WTC11 (cell line): ENCODE measurements at regions of chr7 and their contacts with region 1.

Region 1: GRCh38 chr7:129210256-129210988 is 14.4 kb upstream of the AHCYL2 start:
- DNase-seq: peak; percentile 91
- ATAC-seq: peak; percentile 90
- H3K4me3 Mint-ChIP-seq: no peak overlapping the region
- H3K27ac Mint-ChIP-seq: no peak overlapping the region; the same call in 1 of the 2 replicates
- H3K4me1 Mint-ChIP-seq: 0 out of 2 replicates have a peak, but pooled peaks cover 5% of the 10 kb centered on the region
- H3K27me3 Mint-ChIP-seq: no peaks in the 10 kb centered on the region
- CTCF ChIP-seq: peak; percentile 84

Region 2: GRCh38 chr7:129144095-129144833 is 66.2 kb before region 1 on chr7 and contains the start of gene TSPAN33:
- CTCF ChIA-PET with region 1: interaction called, 10 read pairs
- POLR2A ChIA-PET with region 1: no interaction called
- DNase-seq: peak; percentile 88
- ATAC-seq: peak; percentile 98
- H3K4me3 Mint-ChIP-seq: peak within 1 kb of the TSS; percentile 78
- H3K27ac Mint-ChIP-seq: no peak within 1 kb of the TSS; the same call in 1 of the 2 replicates
- H3K4me1 Mint-ChIP-seq: peaks cover 14% of the 10 kb centered on the region
- H3K27me3 Mint-ChIP-seq: peaks cover 38% of the 10 kb centered on the region
- CTCF ChIP-seq: no peak
- total RNA-seq, gene TSPAN33: 30.0 to 42.9 TPM (median 39.8 TPM) in 3 replicates

Region 3: GRCh38 chr7:129169171-129169671 is 41.2 kb before region 1 on chr7:
- CTCF ChIA-PET with region 1: interaction called, 56 read pairs
- POLR2A ChIA-PET with region 1: interaction called, 5 read pairs
- DNase-seq: peak; percentile 69
- ATAC-seq: peak; percentile 69
- H3K4me3 Mint-ChIP-seq: peak overlapping the region; percentile 77
- H3K27ac Mint-ChIP-seq: peak overlapping the region; percentile 89
- H3K4me1 Mint-ChIP-seq: peaks cover 39% of the 10 kb centered on the region
- H3K27me3 Mint-ChIP-seq: no peaks in the 10 kb centered on the region; the same call in none of the 2 replicates
- CTCF ChIP-seq: no peak

Region 4: DNA sequence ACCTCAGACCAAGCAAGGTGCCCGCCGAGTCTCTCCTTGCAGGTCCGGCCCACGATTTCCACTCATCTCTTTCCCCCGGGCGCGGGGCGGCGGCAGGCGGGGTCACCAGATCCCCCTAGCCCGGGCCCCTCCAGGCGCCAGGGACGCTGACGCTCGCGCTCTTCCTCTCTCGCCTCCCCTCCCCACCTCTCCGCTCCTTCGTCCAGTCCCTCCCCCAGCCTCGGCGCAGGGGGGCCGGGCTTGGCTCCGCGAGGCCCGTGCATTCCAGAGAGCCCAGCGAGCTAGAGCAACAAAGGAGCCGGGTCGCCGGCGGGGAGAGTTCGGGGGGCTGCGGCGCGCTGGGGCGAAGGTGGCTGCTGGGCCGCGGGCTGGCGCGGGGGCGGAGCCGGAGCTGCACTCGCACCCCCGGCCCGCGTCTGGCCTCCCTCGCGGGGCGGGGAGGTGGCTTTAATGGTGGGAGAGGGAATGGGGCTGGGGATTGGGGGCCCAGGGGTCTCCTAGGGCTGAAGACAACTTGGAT is 22.0 kb before region 1 on chr7 and contains the start of gene SMO:
- CTCF ChIA-PET with region 1: interaction called, 10 read pairs
- POLR2A ChIA-PET with region 1: no interaction called
- DNase-seq: peak; percentile 90
- ATAC-seq: peak; percentile 85
- H3K4me3 Mint-ChIP-seq: peak within 1 kb of the TSS; percentile 96
- H3K27ac Mint-ChIP-seq: peak within 1 kb of the TSS; percentile 53; the same call in 1 of the 2 replicates
- H3K4me1 Mint-ChIP-seq: peaks cover 41% of the 10 kb centered on the region
- H3K27me3 Mint-ChIP-seq: peaks cover 30% of the 10 kb centered on the region
- CTCF ChIP-seq: no peak
- total RNA-seq, gene SMO: 56.9 to 61.4 TPM (median 60.3 TPM) in 3 replicates